ENCODE measurements at regions of chr12 and their contacts with region 1.

Region 1: GRCh38 chr12:31117203-31118011 is 43.7 kb downstream of the DDX11 start:
- DNase-seq: peak; percentile 31 to 78 (median 54)
- ATAC-seq: peak; percentile 81
- H3K4me3 ChIP-seq: peak overlapping the region; percentile 57
- H3K4me3 Mint-ChIP-seq: peak overlapping the region; percentile 88
- H3K27ac ChIP-seq: no peak overlapping the region
- H3K27ac Mint-ChIP-seq: no peak overlapping the region
- H3K4me1 ChIP-seq: peaks cover 33% of the 10 kb centered on the region
- H3K4me1 Mint-ChIP-seq: peaks cover 16% of the 10 kb centered on the region
- H3K27me3 ChIP-seq: peaks cover 11 to 16% of the 10 kb centered on the region in 2 experiments
- H3K27me3 Mint-ChIP-seq: peaks cover 33% of the 10 kb centered on the region
- CTCF ChIP-seq: peak; percentile 65

Region 2: DNA sequence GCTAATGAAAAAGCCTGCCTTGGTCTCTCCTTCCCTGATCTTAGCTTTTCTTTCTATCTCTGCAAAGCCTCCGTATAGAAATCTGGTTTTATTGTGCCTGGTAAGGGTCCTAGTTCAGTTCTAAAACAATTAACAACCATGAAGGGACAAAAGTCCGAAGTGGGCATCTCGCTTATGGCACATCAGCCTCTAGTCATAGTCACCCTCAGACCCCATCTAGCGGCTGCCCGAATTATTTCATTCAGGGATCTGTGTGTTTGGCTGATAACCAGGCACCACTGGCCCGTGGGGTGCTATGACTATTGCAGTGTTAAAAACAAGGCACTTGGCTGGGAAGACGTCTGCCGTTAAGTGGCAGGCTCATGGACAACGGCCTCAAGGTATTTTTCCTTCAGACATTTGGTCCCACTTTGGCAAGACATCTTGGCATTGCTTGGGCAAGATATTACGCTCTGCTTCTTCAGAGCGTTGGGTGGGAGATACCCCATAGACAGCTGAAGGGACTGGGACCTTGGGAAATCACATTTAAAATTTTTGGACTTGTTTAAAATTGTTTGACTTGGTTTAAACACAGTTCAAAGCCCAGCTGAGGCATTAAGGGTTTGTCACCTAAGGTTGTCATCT is 121.5 kb after region 1 on chr12:
- CTCF ChIA-PET with region 1: no interaction called
- POLR2A ChIA-PET with region 1: no interaction called
- intact Hi-C with region 1: loop called in 1 of 2 experiments (anchors 1 kb)
- DNase-seq: peak; percentile 23 to 57 (median 40)
- ATAC-seq: no peak
- H3K4me3 ChIP-seq: no peak overlapping the region
- H3K4me3 Mint-ChIP-seq: no peak overlapping the region
- H3K27ac ChIP-seq: no peak overlapping the region
- H3K27ac Mint-ChIP-seq: no peak overlapping the region
- H3K4me1 ChIP-seq: no peaks in the 10 kb centered on the region
- H3K4me1 Mint-ChIP-seq: peaks cover 4% of the 10 kb centered on the region
- H3K27me3 ChIP-seq: peaks cover 5 to 6% of the 10 kb centered on the region in 2 experiments
- H3K27me3 Mint-ChIP-seq: peaks cover 19% of the 10 kb centered on the region
- CTCF ChIP-seq: peak; percentile 61

Region 3: GRCh38 chr12:31274520-31275300 is 157.3 kb after region 1 on chr12:
- CTCF ChIA-PET with region 1: interaction called, 4 read pairs
- POLR2A ChIA-PET with region 1: no interaction called
- intact Hi-C with region 1: loop called in 1 of 2 experiments (anchors 10 kb)
- DNase-seq: no peak
- ATAC-seq: no peak
- H3K4me3 ChIP-seq: no peak overlapping the region
- H3K4me3 Mint-ChIP-seq: no peak overlapping the region
- H3K27ac ChIP-seq: no peak overlapping the region
- H3K27ac Mint-ChIP-seq: no peak overlapping the region
- H3K4me1 ChIP-seq: no peaks in the 10 kb centered on the region
- H3K4me1 Mint-ChIP-seq: peaks cover 6% of the 10 kb centered on the region
- H3K27me3 ChIP-seq: no peaks in the 10 kb centered on the region
- H3K27me3 Mint-ChIP-seq: no peaks in the 10 kb centered on the region
- CTCF ChIP-seq: no peak